Activated CD4-positive, alpha-beta memory T cell treated with anti-CD3 and anti-CD28 coated beads, Interleukin-2, amount 10 ng/mL, durations not matched to agents 7 days and 5 days (primary cell): ENCODE measurements at regions of chr2 and their contacts with region 1.

Region 1: DNA sequence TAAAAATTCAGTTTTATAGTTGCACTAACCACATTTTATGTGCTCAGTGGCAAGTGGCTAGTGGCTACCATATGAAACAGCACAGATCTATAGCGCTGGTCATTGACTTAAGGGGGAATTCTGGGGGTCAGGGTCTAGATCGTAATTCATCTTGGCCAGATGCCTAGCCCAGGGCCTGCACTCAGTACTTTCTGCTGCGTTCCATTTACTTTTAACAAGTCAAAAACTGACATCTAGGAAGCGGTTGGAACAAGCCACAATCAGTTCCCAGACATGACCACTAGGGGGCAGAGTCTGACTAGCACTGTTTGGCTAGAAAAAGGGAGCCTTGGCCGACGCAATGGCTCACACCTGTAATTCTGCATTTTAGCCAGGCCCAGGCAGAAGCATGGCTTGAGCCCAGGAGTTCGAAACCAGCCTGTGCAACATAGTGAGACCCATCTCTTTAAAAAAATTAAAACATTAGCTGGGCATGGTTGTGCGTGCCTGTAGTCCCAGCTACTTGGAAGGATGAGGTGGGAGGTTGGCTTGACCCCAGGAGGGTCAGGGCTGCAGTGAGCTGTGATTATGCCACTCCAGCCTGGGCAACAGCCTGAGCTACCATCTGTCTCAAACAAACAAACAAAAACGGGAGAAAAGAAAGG is 9.0 kb upstream of the TMBIM1 start:
- DNase-seq: peak; percentile 91
- H3K4me3 Mint-ChIP-seq: no peak overlapping the region
- H3K27ac Mint-ChIP-seq: no peak overlapping the region
- H3K4me1 Mint-ChIP-seq: peaks cover 8% of the 10 kb centered on the region
- H3K27me3 Mint-ChIP-seq: no peaks in the 10 kb centered on the region

Region 2: GRCh38 chr2:218286570-218287459 is 14.5 kb before region 1 on chr2:
- CTCF ChIA-PET with region 1: interaction called, 12 read pairs
- POLR2A ChIA-PET with region 1: interaction called, 9 read pairs
- DNase-seq: peak; percentile 87
- H3K4me3 Mint-ChIP-seq: peak overlapping the region; percentile 89
- H3K27ac Mint-ChIP-seq: peak overlapping the region; percentile 89
- H3K4me1 Mint-ChIP-seq: peaks cover 81% of the 10 kb centered on the region
- H3K27me3 Mint-ChIP-seq: no peaks in the 10 kb centered on the region

Region 3: GRCh38 chr2:218442333-218442732 is 141.0 kb after region 1 on chr2:
- CTCF ChIA-PET with region 1: no interaction called
- POLR2A ChIA-PET with region 1: no interaction called
- DNase-seq: no peak
- H3K4me3 Mint-ChIP-seq: no peak overlapping the region
- H3K27ac Mint-ChIP-seq: no peak overlapping the region
- H3K4me1 Mint-ChIP-seq: peaks cover 1% of the 10 kb centered on the region
- H3K27me3 Mint-ChIP-seq: no peaks in the 10 kb centered on the region

Region 4: DNA sequence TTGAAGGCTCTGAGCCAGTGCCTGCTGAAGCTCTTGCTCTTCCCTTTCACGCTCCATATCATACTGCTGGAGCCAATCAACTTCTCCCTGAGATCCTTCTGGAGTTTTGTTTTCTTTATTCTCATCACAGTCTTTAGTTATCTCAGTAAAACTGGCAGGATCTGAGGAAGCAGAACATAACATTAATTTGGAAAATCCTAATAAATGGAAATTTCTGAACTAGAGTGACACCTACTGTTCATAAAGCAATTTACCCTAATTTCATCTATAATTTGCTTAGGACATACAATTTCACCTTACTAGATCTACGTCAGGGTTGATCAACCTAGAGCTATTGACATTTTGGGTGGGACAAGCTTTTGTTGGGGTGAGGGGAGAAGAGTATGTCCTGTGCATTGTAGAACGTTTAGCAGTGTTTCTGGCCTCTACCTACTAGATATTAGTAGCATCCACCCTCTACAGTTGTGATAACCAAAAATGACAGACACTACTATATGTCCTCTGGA is 164.8 kb after region 1 on chr2:
- CTCF ChIA-PET with region 1: interaction called, 10 read pairs
- POLR2A ChIA-PET with region 1: no interaction called
- DNase-seq: no peak
- H3K4me3 Mint-ChIP-seq: no peak overlapping the region
- H3K27ac Mint-ChIP-seq: no peak overlapping the region
- H3K4me1 Mint-ChIP-seq: peaks cover 7% of the 10 kb centered on the region
- H3K27me3 Mint-ChIP-seq: no peaks in the 10 kb centered on the region